T-cell (primary cell): ENCODE measurements at regions of chr14 and their contacts with region 1.

Region 1: GRCh38 chr14:63745858-63746425 is 18.1 kb upstream of the SGPP1 start:
- DNase-seq: peak in 2 of 35 experiments; percentile 21 to 28
- ATAC-seq: peak; percentile 11 to 44 (median 36)
- H3K4me3 ChIP-seq: no peak overlapping the region
- H3K4me3 Mint-ChIP-seq: peak overlapping the region in 1 of 3 donors; percentile 22
- H3K27ac ChIP-seq: peak overlapping the region; percentile 36
- H3K27ac Mint-ChIP-seq: peak overlapping the region; percentile 56 to 80
- H3K4me1 ChIP-seq: peaks cover 3 to 7% of the 10 kb centered on the region in 2 experiments
- H3K4me1 Mint-ChIP-seq: peaks cover 12 to 19% (median 14%) of the 10 kb centered on the region in 3 donors
- H3K27me3 ChIP-seq: no peaks in the 10 kb centered on the region
- H3K27me3 Mint-ChIP-seq: no peaks in the 10 kb centered on the region

Region 2: GRCh38 chr14:63603749-63604277 is 142.1 kb before region 1 on chr14:
- CTCF ChIA-PET with region 1: no interaction called
- POLR2A ChIA-PET with region 1: no interaction called
- DNase-seq: no peak
- ATAC-seq: no peak
- H3K4me3 ChIP-seq: no peak overlapping the region
- H3K4me3 Mint-ChIP-seq: no peak overlapping the region
- H3K27ac ChIP-seq: no peak overlapping the region
- H3K27ac Mint-ChIP-seq: peak overlapping the region in 1 of 2 donors; percentile 48
- H3K4me1 ChIP-seq: peaks cover 0 to 3% of the 10 kb centered on the region in 2 experiments
- H3K4me1 Mint-ChIP-seq: peaks cover 14 to 25% (median 16%) of the 10 kb centered on the region in 3 donors
- H3K27me3 ChIP-seq: no peaks in the 10 kb centered on the region
- H3K27me3 Mint-ChIP-seq: no peaks in the 10 kb centered on the region

Region 3: DNA sequence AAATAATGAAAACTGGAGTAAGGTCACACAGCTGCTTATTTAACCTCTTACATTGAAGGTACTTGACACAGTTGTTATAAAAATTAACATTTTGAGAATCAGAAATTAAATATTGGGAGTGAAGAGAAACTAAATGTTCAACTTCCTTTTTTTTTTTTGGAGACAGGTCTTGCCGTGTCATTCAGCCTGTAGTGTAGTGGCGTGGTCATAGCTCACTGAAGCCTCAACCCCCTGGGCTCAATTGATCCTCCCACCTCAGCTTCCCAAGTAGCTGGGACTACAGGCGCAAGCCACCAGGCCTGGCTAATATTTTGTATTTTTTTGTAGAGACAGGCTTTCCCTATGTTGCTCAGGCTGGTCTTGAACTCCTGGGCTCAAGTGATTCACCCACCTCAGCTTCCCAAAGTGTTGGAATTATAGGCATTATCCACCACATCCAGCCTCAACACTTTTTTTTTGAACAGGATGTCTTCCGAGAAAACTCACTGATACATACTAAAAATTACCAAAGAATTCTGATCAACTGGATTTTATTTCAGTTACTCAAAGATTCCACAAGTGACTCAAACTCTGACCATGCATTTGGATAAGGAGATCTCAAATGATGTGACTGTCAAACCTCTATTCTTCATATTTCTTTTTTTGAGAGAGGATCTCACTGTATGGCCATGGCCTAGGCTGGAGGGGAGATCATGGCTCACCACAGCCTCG is 53.5 kb before region 1 on chr14:
- CTCF ChIA-PET with region 1: interaction called in 1 of 2 experiments, 10 read pairs
- POLR2A ChIA-PET with region 1: no interaction called
- DNase-seq: no peak
- ATAC-seq: no peak
- H3K4me3 ChIP-seq: no peak overlapping the region
- H3K4me3 Mint-ChIP-seq: no peak overlapping the region
- H3K27ac ChIP-seq: no peak overlapping the region
- H3K27ac Mint-ChIP-seq: peak overlapping the region in 1 of 2 donors; percentile 31
- H3K4me1 ChIP-seq: no peaks in the 10 kb centered on the region
- H3K4me1 Mint-ChIP-seq: peaks cover 9 to 16% (median 12%) of the 10 kb centered on the region in 3 donors
- H3K27me3 ChIP-seq: no peaks in the 10 kb centered on the region
- H3K27me3 Mint-ChIP-seq: no peaks in the 10 kb centered on the region

Region 4: DNA sequence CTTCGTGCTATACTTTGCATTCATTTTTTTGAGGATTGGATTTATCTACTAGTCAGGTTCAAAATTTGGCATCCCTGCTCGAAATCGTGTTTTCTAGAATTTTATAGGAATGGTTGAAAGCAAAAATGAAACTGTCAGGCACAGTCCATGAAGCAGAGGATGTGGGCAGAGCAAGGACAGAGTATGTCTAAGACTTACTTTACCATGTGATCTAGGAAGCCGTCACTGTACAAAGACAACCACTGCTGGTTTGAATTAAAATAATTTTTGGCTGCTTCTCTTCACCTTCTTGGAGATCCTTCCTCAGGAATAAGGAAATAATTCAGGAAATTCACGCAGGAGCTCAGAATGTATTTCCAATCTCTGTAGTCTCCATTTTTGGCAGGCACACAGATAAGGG is 13.5 kb after region 1 on chr14:
- CTCF ChIA-PET with region 1: no interaction called
- POLR2A ChIA-PET with region 1: no interaction called
- DNase-seq: peak in 15 of 35 experiments; percentile 4 to 57 (median 11)
- ATAC-seq: peak; percentile 96 to 100 (median 98)
- H3K4me3 ChIP-seq: peak overlapping the region in 1 of 2 donors; percentile 23
- H3K4me3 Mint-ChIP-seq: peak overlapping the region; percentile 53 to 77 (median 70)
- H3K27ac ChIP-seq: peak overlapping the region; percentile 53
- H3K27ac Mint-ChIP-seq: peak overlapping the region; percentile 96
- H3K4me1 ChIP-seq: peaks cover 7 to 14% of the 10 kb centered on the region in 2 experiments
- H3K4me1 Mint-ChIP-seq: peaks cover 13% of the 10 kb centered on the region in 3 donors
- H3K27me3 ChIP-seq: no peaks in the 10 kb centered on the region
- H3K27me3 Mint-ChIP-seq: no peaks in the 10 kb centered on the region

Region 5: DNA sequence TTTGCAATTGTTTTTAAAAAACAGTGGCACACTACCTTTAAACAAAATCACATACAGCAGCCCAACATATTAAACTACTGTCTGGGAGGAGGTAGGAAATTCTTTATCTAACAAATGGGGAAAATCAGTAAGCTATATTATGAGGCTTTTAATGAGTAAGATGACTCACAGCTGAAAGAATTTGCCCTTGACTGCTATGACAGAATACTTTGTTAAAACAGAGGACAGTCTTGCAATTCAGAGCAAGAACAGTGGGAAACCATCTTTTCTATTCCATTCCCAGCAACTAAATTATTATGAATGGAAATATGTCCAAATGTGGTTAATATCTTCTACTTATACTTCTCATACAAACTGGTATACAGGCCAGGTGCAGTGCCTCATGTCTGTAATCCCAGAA is 31.1 kb after region 1 on chr14:
- CTCF ChIA-PET with region 1: no interaction called
- POLR2A ChIA-PET with region 1: no interaction called
- DNase-seq: no peak
- ATAC-seq: no peak
- H3K4me3 ChIP-seq: no peak overlapping the region
- H3K4me3 Mint-ChIP-seq: no peak overlapping the region
- H3K27ac ChIP-seq: no peak overlapping the region
- H3K27ac Mint-ChIP-seq: no peak overlapping the region
- H3K4me1 ChIP-seq: no peaks in the 10 kb centered on the region
- H3K4me1 Mint-ChIP-seq: no peaks in the 10 kb centered on the region
- H3K27me3 ChIP-seq: no peaks in the 10 kb centered on the region
- H3K27me3 Mint-ChIP-seq: no peaks in the 10 kb centered on the region

Region 6: DNA sequence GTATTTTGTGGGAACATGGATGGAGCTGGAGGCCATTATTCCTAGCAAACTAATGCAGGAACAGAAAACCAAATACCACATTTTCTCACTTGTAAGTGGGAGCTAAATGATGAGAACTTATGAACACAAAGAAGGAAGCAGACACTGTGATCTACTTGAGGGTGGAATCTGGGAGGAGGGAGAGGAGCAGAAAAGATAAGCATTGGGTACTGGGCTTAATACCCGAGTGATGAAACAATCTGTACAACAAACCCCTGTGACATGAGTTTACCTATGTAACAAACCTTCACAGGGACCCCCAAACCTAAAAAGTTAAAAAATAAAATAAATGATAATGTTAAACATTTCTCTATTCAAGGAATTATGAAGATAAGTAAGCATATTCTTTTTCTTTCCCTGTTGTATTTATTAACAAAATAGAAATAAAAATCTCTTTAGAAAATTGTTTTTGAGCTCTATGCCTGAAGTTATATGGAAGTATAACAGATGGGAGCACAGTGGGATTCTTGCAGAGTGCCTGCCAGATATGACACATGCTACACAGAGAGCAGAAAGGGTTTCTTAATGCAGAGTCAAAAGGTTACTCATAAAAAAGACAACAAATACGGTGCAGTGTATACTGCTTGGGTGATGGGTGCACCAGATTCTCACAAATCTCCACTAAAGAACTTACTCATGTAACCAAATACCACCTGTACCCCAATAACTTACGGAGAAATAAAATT is 54.9 kb after region 1 on chr14:
- CTCF ChIA-PET with region 1: interaction called in 1 of 2 experiments, 11 read pairs
- POLR2A ChIA-PET with region 1: no interaction called
- DNase-seq: no peak
- ATAC-seq: no peak
- H3K4me3 ChIP-seq: no peak overlapping the region
- H3K4me3 Mint-ChIP-seq: no peak overlapping the region
- H3K27ac ChIP-seq: no peak overlapping the region
- H3K27ac Mint-ChIP-seq: no peak overlapping the region
- H3K4me1 ChIP-seq: peaks cover 0 to 2% of the 10 kb centered on the region in 2 experiments
- H3K4me1 Mint-ChIP-seq: peaks cover 0 to 4% (median 4%) of the 10 kb centered on the region in 3 donors
- H3K27me3 ChIP-seq: no peaks in the 10 kb centered on the region
- H3K27me3 Mint-ChIP-seq: peaks cover 0 to 3% of the 10 kb centered on the region in 2 donors

Region 7: GRCh38 chr14:63840981-63841380 is 95.0 kb after region 1 on chr14:
- CTCF ChIA-PET with region 1: no interaction called
- POLR2A ChIA-PET with region 1: no interaction called
- DNase-seq: peak; percentile 22 to 75 (median 63)
- ATAC-seq: peak; percentile 58 to 84 (median 80)
- H3K4me3 ChIP-seq: no peak overlapping the region
- H3K4me3 Mint-ChIP-seq: no peak overlapping the region
- H3K27ac ChIP-seq: no peak overlapping the region
- H3K27ac Mint-ChIP-seq: no peak overlapping the region
- H3K4me1 ChIP-seq: peaks cover 0 to 4% of the 10 kb centered on the region in 2 experiments
- H3K4me1 Mint-ChIP-seq: peaks cover 2 to 8% (median 4%) of the 10 kb centered on the region in 3 donors
- H3K27me3 ChIP-seq: no peaks in the 10 kb centered on the region
- H3K27me3 Mint-ChIP-seq: no peaks in the 10 kb centered on the region